ENCODE measurements at regions of chr19 and their contacts with region 1.

Region 1: GRCh38 chr19:2248136-2249009 is 750 bp upstream of the AMH start:
- DNase-seq: no peak
- ATAC-seq: no peak
- H3K4me3 Mint-ChIP-seq: no peak overlapping the region
- H3K27ac Mint-ChIP-seq: no peak overlapping the region
- H3K4me1 Mint-ChIP-seq: peaks cover 14% of the 10 kb centered on the region
- H3K27me3 Mint-ChIP-seq: peaks cover 2% of the 10 kb centered on the region
- CTCF ChIP-seq: no peak

Region 2: DNA sequence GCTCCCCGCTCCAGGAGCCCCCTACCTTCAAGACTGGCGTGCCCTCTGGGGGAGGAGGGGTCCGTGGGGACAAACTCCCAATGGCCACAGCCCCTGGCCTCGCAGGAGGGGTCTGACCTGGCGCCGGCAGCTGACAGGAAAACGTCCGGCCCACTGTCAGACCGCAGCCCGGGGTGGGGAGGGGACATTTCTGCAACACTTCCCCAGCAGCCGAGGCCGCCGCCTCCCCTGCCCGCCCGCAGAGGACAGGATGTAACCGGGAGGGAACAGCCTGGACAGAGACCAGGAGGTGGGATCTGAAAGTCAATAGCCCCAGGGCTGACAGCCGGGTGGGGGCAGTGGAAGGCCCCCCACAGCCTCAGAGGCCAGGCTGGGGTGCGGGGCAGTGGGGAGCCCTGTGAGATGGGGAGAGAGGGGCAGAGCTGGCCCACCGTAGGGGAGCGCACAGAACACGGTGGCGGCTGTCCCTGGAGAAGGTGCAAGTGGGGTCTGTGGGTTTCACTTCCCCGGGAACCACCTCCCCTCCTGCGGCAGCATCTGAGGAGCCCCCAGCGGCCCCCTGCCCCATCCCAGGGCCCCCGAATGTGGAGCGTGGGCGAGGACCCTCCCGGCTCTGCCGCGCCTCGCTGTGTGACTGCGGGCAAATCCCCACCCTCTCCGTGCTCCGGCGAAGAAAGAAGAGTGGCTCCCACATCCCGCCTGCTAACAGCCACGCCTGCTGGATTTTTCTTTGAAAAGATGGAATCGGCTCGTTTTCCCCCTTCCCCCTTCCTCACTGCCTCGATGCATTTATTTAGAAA is 33.9 kb after region 1 on chr19 and contains the start of gene PEAK3:
- CTCF ChIA-PET with region 1: no interaction called
- POLR2A ChIA-PET with region 1: no interaction called
- intact Hi-C with region 1: no loop called
- DNase-seq: peak; percentile 46
- ATAC-seq: peak; percentile 60
- H3K4me3 Mint-ChIP-seq: peak within 1 kb of the TSS; percentile 60
- H3K27ac Mint-ChIP-seq: peak within 1 kb of the TSS; percentile 24
- H3K4me1 Mint-ChIP-seq: peaks cover 33% of the 10 kb centered on the region
- H3K27me3 Mint-ChIP-seq: no peaks in the 10 kb centered on the region
- CTCF ChIP-seq: no peak
- total RNA-seq, gene PEAK3: 0.09 TPM in 1 of 2 replicates, not detected in the other

Region 3: DNA sequence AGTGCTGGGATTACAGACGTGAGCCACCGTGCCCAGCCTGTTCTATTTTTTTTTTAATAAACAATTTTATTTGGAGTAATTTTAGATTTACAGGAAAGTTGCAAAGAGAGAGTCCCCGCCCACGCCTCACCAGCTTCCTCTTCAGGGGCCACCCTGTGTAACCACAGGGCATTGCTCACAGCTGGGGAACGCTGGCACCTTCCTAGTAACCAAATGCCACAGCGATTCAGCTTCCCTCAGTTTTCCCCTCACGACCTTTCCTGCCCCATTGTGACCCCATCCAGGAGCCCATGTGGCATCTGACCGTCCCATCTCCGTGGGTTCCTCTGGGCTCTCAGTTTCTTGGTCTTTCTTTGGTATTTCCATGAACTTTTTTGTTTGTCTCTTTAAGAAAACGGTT is 370.2 kb after region 1 on chr19:
- CTCF ChIA-PET with region 1: no interaction called
- POLR2A ChIA-PET with region 1: interaction called, 17 read pairs
- intact Hi-C with region 1: no loop called
- DNase-seq: peak; percentile 59
- ATAC-seq: peak; percentile 26
- H3K4me3 Mint-ChIP-seq: peak overlapping the region; percentile 70
- H3K27ac Mint-ChIP-seq: peak overlapping the region; percentile 94
- H3K4me1 Mint-ChIP-seq: peaks cover 96% of the 10 kb centered on the region
- H3K27me3 Mint-ChIP-seq: no peaks in the 10 kb centered on the region
- CTCF ChIP-seq: no peak

Measured in activated B cell treated with CpG ODN at 0.5 μM for 24 hours (primary cell).